ENCODE measurements at regions of chr15 and their contacts with region 1.

Region 1: DNA sequence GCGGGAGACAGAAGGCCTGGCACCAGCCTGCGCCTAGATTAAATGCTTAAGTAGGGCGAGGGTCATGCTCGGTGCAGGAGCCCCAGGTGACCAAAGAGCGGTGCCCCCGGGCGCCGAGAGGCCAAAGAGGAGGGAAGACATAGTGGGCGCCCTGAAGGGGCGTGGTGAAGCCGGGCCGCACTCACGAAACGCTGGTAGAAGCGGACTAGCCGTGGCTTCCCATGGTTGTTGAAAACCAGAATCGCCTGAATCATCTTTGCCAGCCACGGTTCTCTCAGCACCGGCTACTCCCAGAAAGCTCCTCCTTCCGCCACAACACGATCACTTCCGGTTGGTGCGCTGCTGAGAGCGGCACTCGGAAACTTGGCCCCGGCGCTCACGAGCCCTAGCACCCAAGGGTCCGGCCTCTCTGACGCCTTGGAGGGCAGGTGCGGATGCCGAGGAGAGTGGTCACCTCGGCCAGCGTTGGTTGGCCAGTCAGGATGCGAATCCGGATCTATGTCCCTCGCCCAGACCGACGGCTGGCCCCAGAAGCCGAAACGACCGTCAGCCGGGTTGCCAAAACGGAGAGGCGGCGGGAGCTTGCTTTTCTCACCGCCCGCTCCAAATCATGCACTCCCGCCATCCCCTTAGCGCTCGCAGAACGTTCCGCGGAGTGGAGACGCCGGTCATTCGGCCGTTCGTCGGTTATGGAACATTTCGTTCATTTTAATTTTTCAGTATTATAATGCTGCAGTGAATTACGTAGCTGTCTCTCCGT is at the start of gene AP3S2:
- DNase-seq: peak; percentile 82
- ATAC-seq: peak; percentile 89
- H3K4me3 Mint-ChIP-seq: peak within 1 kb of the TSS; percentile 95
- H3K27ac Mint-ChIP-seq: peak within 1 kb of the TSS; percentile 94
- H3K4me1 Mint-ChIP-seq: peaks cover 40% of the 10 kb centered on the region
- H3K27me3 Mint-ChIP-seq: no peaks in the 10 kb centered on the region
- CTCF ChIP-seq: no peak
- total RNA-seq, gene AP3S2: 31.8 and 36.4 TPM in 2 replicates

Region 2: DNA sequence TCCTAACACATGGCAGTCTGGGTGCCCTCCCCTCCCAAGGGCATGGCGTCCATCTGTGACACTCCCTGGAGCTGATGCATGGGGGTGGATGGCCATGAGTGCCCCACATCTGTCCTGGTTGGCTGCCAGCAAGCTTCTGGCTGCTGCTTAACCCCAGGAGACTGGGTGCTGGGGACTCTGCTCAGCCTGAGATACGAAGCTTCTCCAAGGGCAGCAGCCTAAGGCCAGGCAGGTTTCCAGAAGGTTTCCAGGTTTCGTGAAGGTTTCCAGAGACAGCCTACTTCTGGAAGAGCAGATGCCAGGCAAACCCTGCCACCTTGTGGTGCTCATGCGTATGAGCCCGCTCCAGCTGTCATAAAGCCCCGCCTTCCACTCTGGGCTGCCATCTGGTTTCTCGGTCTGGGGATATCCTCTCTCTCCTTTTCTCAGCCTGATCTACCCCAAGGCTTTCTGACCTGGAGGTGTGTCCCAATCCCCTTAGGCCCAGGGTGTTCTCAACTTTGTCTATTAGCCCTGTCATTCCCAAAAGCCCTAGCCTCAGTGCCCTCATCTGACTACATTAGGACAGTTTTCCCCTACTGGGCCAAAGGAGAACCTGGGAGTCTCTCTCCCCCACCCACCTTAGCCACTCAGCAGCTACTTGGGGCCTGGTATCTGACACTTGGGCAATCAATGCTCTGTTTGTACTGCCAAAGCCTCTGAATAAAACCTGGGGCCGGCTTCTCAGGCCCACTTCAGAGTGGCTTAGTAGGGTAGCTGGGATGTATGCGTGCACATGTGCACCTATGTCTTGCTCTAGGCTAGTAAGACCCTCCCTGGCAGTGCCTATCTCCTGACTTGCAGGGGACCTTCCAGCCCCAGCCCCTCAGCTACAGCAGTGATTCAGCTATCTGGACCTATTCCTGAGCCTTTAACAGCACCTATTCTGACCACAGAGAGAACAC is 1438.7 kb before region 1 on chr15:
- CTCF ChIA-PET with region 1: no interaction called
- POLR2A ChIA-PET with region 1: no interaction called
- intact Hi-C with region 1: no loop called
- DNase-seq: no peak
- ATAC-seq: peak; percentile 83
- H3K4me3 Mint-ChIP-seq: no peak overlapping the region
- H3K27ac Mint-ChIP-seq: no peak overlapping the region
- H3K4me1 Mint-ChIP-seq: peaks cover 2% of the 10 kb centered on the region
- H3K27me3 Mint-ChIP-seq: peaks cover 2% of the 10 kb centered on the region
- CTCF ChIP-seq: no peak

Region 3: DNA sequence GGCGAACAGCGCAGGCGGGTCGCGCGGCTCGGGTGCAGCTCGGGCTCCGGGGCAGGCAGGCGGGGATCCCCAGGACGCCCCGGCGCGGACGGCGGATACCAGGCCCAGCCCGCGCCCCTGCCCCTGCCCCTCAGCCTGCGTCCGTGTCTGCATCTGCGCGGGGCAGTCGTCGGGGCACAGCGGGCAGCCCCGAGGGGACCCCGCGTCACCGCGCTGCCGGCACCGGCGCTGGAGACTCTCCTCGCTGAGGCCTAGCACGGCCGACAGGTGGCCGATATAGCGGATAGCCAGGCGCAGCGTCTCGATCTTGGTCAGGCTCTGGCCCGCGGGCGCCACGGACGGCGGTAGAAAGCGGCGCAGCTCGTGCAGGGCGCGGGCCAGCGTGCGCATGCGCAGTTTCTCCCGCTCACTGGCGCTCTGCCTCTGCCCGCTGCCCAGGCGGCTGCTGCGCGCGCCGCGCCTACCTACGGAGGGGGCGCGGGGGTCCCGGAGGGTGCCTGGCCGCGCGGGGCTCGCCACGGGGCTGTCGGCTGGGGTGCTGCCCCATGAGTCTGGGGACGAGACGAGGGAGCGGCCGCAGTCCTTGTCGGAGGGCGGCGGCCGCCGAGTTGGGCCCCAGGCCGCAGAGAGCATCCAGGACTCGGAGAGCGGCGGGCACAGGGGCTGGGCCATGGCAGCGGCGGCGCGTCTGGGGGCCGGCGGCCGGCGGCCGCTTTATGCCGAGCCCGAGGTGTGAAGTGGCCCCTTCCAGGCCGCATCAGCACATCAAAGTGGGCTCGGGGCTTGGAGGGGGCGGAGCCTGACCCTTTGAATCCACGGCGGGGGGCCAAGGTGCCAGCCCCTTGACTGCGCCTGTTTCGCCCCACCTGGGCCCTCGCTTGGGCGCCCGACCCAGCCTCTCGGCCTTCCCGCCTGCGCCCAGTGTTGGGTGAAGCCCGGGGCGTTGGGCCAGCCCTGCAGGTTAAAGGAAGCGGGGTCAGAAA is 143.0 kb before region 1 on chr15 and contains the start of gene MESP1:
- CTCF ChIA-PET with region 1: no interaction called
- POLR2A ChIA-PET with region 1: no interaction called
- intact Hi-C with region 1: loop called (anchors 5 kb)
- DNase-seq: peak; percentile 89
- ATAC-seq: peak; percentile 93
- H3K4me3 Mint-ChIP-seq: peak within 1 kb of the TSS; percentile 80
- H3K27ac Mint-ChIP-seq: no peak within 1 kb of the TSS
- H3K4me1 Mint-ChIP-seq: peaks cover 4% of the 10 kb centered on the region
- H3K27me3 Mint-ChIP-seq: peaks cover 9% of the 10 kb centered on the region
- CTCF ChIP-seq: no peak
- total RNA-seq, gene MESP1: 0.24 and 0.71 TPM in 2 replicates

Region 4: GRCh38 chr15:89964232-89964954 is 70.5 kb after region 1 on chr15:
- CTCF ChIA-PET with region 1: no interaction called
- POLR2A ChIA-PET with region 1: no interaction called
- intact Hi-C with region 1: loop called (anchors 10 kb)
- DNase-seq: no peak
- ATAC-seq: no peak
- H3K4me3 Mint-ChIP-seq: no peak overlapping the region
- H3K27ac Mint-ChIP-seq: no peak overlapping the region
- H3K4me1 Mint-ChIP-seq: no peaks in the 10 kb centered on the region
- H3K27me3 Mint-ChIP-seq: no peaks in the 10 kb centered on the region
- CTCF ChIP-seq: no peak

Region 5: GRCh38 chr15:90031231-90031791 is 137.4 kb after region 1 on chr15:
- CTCF ChIA-PET with region 1: interaction called, 4 read pairs
- POLR2A ChIA-PET with region 1: interaction called, 11 read pairs
- intact Hi-C with region 1: no loop called
- DNase-seq: no peak
- ATAC-seq: peak; percentile 91
- H3K4me3 Mint-ChIP-seq: peak overlapping the region; percentile 67
- H3K27ac Mint-ChIP-seq: peak overlapping the region; percentile 76
- H3K4me1 Mint-ChIP-seq: peaks cover 58% of the 10 kb centered on the region
- H3K27me3 Mint-ChIP-seq: no peaks in the 10 kb centered on the region
- CTCF ChIP-seq: no peak

Region 6: DNA sequence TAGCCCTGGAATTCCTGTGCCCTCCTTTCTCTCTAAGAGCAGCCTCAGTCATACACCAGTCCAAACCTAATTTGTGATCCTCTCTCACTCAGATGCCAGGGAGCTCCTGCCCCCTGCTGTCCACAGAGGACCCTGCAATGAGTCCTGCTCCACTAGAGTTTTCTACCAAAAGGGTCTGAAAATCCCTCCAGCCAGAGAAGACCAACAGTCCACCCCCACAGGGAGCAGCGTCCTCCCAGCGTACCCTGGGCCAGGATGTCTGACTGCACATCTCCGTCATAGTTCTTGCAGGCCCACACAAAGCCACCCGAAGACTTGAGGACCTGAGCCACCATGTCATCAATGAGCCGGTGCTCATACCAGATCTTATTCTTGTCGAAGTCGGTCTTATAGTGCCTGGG is 193.0 kb after region 1 on chr15:
- CTCF ChIA-PET with region 1: interaction called, 22 read pairs
- POLR2A ChIA-PET with region 1: interaction called, 3 read pairs
- intact Hi-C with region 1: loop called (anchors 1 kb)
- DNase-seq: peak; percentile 45
- ATAC-seq: peak; percentile 79
- H3K4me3 Mint-ChIP-seq: no peak overlapping the region
- H3K27ac Mint-ChIP-seq: no peak overlapping the region
- H3K4me1 Mint-ChIP-seq: peaks cover 15% of the 10 kb centered on the region
- H3K27me3 Mint-ChIP-seq: no peaks in the 10 kb centered on the region
- CTCF ChIP-seq: peak; percentile 22

Measured in activated B cell treated with CpG ODN at 0.5 μM for 24 hours (primary cell).